CD8-positive, alpha-beta T cell (primary cell): ENCODE measurements at regions of chr10 and their contacts with region 1.

Region 1: GRCh38 chr10:3785257-3785850 is 345 bp upstream of the KLF6 start:
- DNase-seq: peak; percentile 99 to 100 (median 99)
- ATAC-seq: peak; percentile 78
- H3K4me3 ChIP-seq: peak overlapping the region; percentile 78 to 80
- H3K4me3 Mint-ChIP-seq: peak overlapping the region; percentile 97
- H3K27ac ChIP-seq: peak overlapping the region; percentile 99
- H3K27ac Mint-ChIP-seq: peak overlapping the region; percentile 97
- H3K4me1 ChIP-seq: peaks cover 29% of the 10 kb centered on the region
- H3K4me1 Mint-ChIP-seq: peaks cover 36% of the 10 kb centered on the region
- H3K27me3 ChIP-seq: no peaks in the 10 kb centered on the region
- H3K27me3 Mint-ChIP-seq: no peaks in the 10 kb centered on the region
- CTCF ChIP-seq: no peak

Region 2: DNA sequence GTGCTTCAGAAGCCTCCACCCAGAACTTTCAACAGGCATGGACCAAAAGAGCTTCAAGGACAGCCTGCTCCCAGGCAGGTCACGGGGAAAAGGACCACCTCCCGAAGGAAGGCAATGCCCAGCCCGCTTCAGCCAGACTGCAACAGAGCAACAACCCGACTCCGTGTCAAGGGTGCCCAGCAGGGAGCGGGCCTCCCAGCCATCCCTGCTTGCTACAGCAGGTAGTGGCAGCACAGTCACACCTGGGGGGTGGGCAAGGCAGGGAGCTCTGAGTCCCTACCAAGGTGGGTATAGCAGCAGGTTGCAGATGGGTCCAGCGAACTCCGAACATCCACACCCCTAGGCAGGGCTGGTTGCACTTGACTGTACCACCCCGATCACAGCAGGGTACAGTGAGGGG is 1185.8 kb before region 1 on chr10:
- CTCF ChIA-PET with region 1: no interaction called
- POLR2A ChIA-PET with region 1: no interaction called
- intact Hi-C with region 1: no loop called
- DNase-seq: no peak
- ATAC-seq: no peak
- H3K4me3 ChIP-seq: no peak overlapping the region
- H3K4me3 Mint-ChIP-seq: no peak overlapping the region
- H3K27ac ChIP-seq: no peak overlapping the region
- H3K27ac Mint-ChIP-seq: no peak overlapping the region
- H3K4me1 ChIP-seq: no peaks in the 10 kb centered on the region
- H3K4me1 Mint-ChIP-seq: no peaks in the 10 kb centered on the region
- H3K27me3 ChIP-seq: no peaks in the 10 kb centered on the region
- H3K27me3 Mint-ChIP-seq: no peaks in the 10 kb centered on the region
- CTCF ChIP-seq: no peak

Region 3: DNA sequence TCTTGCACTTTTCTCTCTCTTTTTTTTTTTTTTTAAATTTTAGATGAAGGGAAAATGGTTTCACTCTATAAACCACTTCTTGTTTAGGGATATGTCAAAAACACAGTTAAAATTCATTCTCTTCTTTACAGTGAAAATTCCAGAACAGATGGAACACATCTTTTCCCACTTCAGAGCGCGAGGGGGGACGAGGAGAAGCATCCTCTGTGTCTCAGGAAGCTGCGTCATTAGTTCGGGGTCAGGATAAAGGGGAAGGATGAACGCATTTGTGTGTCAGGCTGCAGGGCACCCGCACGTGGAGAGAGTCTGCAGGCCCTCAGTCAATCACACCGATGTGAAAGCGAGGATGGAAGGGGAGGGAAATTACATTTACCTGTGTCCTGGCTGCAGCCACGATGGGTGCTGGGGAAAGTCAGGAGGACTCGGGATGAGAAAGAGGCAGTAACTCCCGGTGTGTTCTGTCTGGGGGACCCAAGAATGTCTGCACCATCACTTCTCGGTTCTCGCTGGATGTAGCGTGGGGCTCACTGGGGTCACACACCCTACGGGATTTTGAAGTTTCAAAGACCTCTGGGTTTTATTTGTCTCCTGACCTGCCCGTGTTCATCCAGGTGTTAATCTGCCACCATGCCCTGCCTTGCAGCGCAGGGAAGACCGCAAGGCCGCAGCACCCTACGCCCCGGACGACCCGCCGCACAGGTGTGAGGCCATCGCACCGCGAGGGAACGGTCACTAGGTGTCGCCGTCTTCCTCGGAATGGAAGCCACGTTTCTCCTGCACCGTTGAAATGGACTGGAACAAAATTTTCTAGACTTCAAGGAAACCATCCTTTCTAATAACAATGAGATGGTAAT is 546.1 kb before region 1 on chr10:
- CTCF ChIA-PET with region 1: no interaction called
- POLR2A ChIA-PET with region 1: no interaction called
- intact Hi-C with region 1: loop called in 1 of 2 experiments (anchors 5 kb)
- DNase-seq: peak; percentile 38 to 80 (median 73)
- ATAC-seq: peak; percentile 73
- H3K4me3 ChIP-seq: no peak overlapping the region
- H3K4me3 Mint-ChIP-seq: no peak overlapping the region
- H3K27ac ChIP-seq: no peak overlapping the region
- H3K27ac Mint-ChIP-seq: no peak overlapping the region
- H3K4me1 ChIP-seq: no peaks in the 10 kb centered on the region
- H3K4me1 Mint-ChIP-seq: peaks cover 4% of the 10 kb centered on the region
- H3K27me3 ChIP-seq: peaks cover 0 to 9% of the 10 kb centered on the region in 2 experiments
- H3K27me3 Mint-ChIP-seq: peaks cover 18% of the 10 kb centered on the region
- CTCF ChIP-seq: peak; percentile 92

Region 4: GRCh38 chr10:3805791-3806461 is 20.6 kb after region 1 on chr10:
- CTCF ChIA-PET with region 1: interaction called, 5 read pairs
- POLR2A ChIA-PET with region 1: interaction called, 229 read pairs
- intact Hi-C with region 1: loop called (anchors 1 kb)
- DNase-seq: peak in 6 of 9 experiments; percentile 51 to 76 (median 66)
- ATAC-seq: peak; percentile 7
- H3K4me3 ChIP-seq: no peak overlapping the region
- H3K4me3 Mint-ChIP-seq: peak overlapping the region; percentile 36
- H3K27ac ChIP-seq: peak overlapping the region; percentile 85 to 98
- H3K27ac Mint-ChIP-seq: peak overlapping the region; percentile 99
- H3K4me1 ChIP-seq: peaks cover 80% of the 10 kb centered on the region
- H3K4me1 Mint-ChIP-seq: peaks cover 71% of the 10 kb centered on the region
- H3K27me3 ChIP-seq: peaks cover 0 to 4% of the 10 kb centered on the region in 2 experiments
- H3K27me3 Mint-ChIP-seq: no peaks in the 10 kb centered on the region
- CTCF ChIP-seq: no peak

Region 5: DNA sequence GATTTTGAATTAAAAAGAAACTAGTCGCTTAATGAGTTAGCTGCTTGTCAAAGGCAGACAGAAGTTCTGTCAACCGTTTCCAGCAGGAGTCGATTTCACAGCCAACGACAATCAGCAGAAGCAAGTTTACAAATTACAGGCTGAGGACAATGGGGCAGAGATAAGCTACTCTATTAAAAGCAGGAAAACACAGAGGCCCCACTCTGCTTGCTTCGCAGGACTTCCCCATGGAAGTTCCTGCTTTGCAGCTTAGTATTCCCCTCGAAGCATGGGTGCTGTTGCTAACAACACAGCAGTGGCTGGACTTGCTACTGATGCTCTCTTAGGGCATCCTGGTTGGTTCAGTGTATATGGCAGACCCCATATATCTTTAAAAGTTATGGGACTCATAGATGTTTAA is 50.4 kb after region 1 on chr10:
- CTCF ChIA-PET with region 1: interaction called, 3 read pairs
- POLR2A ChIA-PET with region 1: interaction called, 15 read pairs
- intact Hi-C with region 1: no loop called
- DNase-seq: peak in 2 of 9 experiments; percentile 20 to 50
- ATAC-seq: no peak
- H3K4me3 ChIP-seq: no peak overlapping the region
- H3K4me3 Mint-ChIP-seq: no peak overlapping the region
- H3K27ac ChIP-seq: no peak overlapping the region
- H3K27ac Mint-ChIP-seq: no peak overlapping the region
- H3K4me1 ChIP-seq: no peaks in the 10 kb centered on the region
- H3K4me1 Mint-ChIP-seq: peaks cover 9% of the 10 kb centered on the region
- H3K27me3 ChIP-seq: no peaks in the 10 kb centered on the region
- H3K27me3 Mint-ChIP-seq: no peaks in the 10 kb centered on the region
- CTCF ChIP-seq: no peak

Region 6: DNA sequence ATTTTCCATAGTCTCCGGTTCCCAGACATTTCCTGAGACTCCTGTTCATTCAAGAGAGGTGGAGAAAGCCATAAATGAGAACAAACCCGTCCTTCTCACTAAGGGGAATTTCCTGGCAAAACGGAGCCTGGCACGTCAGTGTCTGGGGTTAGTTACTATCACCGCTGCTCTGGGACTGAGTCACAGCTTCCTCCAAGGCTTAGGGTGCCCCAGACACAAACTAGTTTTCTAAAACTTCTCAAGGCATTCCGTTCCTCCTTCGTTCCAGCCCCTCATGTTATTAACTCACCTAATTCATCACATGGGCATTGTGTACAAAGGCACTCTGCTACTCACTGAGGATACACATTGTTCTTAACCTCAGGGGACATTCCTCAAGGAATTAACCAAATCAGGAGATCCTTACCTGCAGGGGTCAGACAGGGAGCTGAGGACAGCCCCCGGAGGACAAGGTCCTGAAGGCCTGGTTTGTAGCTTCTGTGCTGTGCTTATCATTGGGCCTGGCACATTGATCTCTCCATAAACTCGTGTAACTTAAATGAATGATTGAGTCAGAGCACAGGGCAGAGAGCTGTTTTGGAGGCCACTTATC is 102.6 kb after region 1 on chr10:
- CTCF ChIA-PET with region 1: no interaction called
- POLR2A ChIA-PET with region 1: interaction called, 11 read pairs
- intact Hi-C with region 1: loop called in 1 of 2 experiments (anchors 5 kb)
- DNase-seq: peak; percentile 26 to 93 (median 57)
- ATAC-seq: peak; percentile 69
- H3K4me3 ChIP-seq: peak overlapping the region in 1 of 2 experiments; percentile 21
- H3K4me3 Mint-ChIP-seq: peak overlapping the region; percentile 22
- H3K27ac ChIP-seq: peak overlapping the region in 1 of 2 experiments; percentile 72
- H3K27ac Mint-ChIP-seq: peak overlapping the region; percentile 81
- H3K4me1 ChIP-seq: peaks cover 12% of the 10 kb centered on the region
- H3K4me1 Mint-ChIP-seq: peaks cover 29% of the 10 kb centered on the region
- H3K27me3 ChIP-seq: no peaks in the 10 kb centered on the region
- H3K27me3 Mint-ChIP-seq: no peaks in the 10 kb centered on the region
- CTCF ChIP-seq: no peak